ENCODE measurements at regions of chr16 and their contacts with region 1.

Region 1: GRCh38 chr16:84116720-84117493 is at the start of gene MBTPS1:
- DNase-seq: peak; percentile 94 to 98
- ATAC-seq: peak; percentile 96 to 98
- H3K4me3 ChIP-seq: peak within 1 kb of the TSS; percentile 76
- H3K27ac ChIP-seq: peak within 1 kb of the TSS; percentile 88 to 96
- H3K4me1 ChIP-seq: peaks cover 8% of the 10 kb centered on the region
- CTCF ChIP-seq: no peak; the same call in 2 of the 3 replicates
- EP300 ChIP-seq: no peak; a peak in 1 of 5 replicates
- POLR2A ChIP-seq: peak; percentile 70
- RAD21 ChIP-seq: no peak
- polyA plus RNA-seq, gene MBTPS1: 76.7 and 88.4 TPM in 2 replicates

Region 2: DNA sequence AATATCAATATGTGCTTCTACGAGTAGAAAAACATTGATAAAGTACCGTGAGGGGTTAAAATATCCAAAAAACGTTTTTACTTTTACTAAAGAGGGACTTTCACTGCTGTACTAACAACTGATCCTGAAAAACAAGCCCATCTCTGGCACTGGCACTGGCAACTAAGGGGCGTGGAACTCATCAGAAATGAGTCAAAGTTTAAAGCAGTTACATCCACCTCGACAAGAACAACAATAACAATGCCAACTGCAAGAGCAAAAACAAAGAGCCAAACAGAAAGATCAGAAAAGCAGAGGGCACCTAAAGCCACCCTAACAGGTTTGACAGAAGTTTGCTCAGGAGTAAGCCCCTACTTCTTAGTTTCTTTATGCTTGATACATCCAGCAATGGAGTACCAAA is 13.2 kb before region 1 on chr16:
- CTCF ChIA-PET with region 1: interaction called, 14 read pairs
- POLR2A ChIA-PET with region 1: interaction called, 4 read pairs
- DNase-seq: no peak
- ATAC-seq: no peak
- H3K4me3 ChIP-seq: no peak overlapping the region
- H3K27ac ChIP-seq: no peak overlapping the region
- H3K4me1 ChIP-seq: peaks cover 23% of the 10 kb centered on the region
- CTCF ChIP-seq: no peak
- EP300 ChIP-seq: no peak
- POLR2A ChIP-seq: no peak
- RAD21 ChIP-seq: no peak